Activated T-helper 1 cell treated with anti-CD3 and anti-CD28 coated beads, Interleukin-12 subunit alpha, Interleukin-12 subunit beta, Interleukin-2, Interleukin-4 antibody, amounts not matched to agents 30 ng/mL and 10 ng/mL and 1 ng/mL, durations not matched to agents 14 hours and 24 hours and 36 hours (primary cell): ENCODE measurements at regions of chr2 and their contacts with region 1.

Region 1: GRCh38 chr2:69643602-69644505 is at the start of gene AAK1:
- DNase-seq: peak; percentile 76
- H3K4me3 Mint-ChIP-seq: peak within 1 kb of the TSS; percentile 92
- H3K27ac Mint-ChIP-seq: peak within 1 kb of the TSS; percentile 95
- H3K4me1 Mint-ChIP-seq: peaks cover 71% of the 10 kb centered on the region
- H3K27me3 Mint-ChIP-seq: no peaks in the 10 kb centered on the region
- total RNA-seq, gene AAK1: 89.2 and 94.0 TPM in 2 replicates

Region 2: DNA sequence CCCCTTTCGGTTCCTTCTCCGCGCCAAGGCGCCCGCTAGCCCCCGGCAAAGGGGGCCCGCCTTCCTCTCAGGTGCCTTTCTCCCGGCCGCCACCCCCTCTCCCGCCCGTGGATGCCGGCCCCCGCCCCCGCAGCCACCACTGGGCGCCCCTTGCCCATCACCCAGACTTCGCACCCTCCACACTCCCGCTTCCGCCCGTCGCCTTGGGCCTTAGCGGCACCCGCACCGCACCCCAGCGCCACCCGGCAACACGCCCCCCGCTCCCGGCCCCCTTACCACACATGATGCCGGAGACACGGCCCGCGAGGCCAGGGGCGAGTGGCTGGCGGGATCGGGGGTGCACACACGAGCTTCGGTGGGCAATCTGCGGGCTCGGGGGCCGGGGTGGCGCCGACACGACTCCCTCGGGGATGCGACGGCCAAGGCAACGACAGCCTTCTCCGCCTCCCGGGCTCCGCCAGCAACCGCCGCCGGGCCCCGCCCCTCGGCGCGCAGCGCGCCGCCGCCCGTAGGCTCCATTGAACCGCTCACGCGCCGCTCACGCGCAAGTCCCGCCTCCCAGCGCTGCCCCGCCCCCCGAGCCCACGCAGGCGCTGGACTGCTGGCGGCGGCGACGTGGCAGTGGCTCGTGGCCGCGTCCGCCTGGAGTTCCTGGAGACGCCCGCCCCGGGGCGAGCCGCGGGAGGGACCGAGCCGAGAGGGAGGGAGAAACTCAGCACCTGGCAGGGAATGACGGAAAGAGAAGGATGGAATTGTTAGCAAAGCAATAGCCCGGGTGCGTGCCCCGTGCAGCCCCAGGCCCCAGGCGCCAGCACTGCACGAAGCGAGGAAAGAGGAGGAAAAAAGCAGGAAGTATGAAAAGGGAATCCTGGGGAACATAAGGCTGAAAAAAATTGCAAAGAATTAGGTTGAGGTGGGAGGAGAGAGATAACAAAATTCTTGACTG is 256.8 kb before region 1 on chr2 and contains the start of gene GFPT1:
- intact Hi-C with region 1: loop called (anchors 2 kb)
- DNase-seq: peak; percentile 93
- H3K4me3 Mint-ChIP-seq: peak within 1 kb of the TSS; percentile 87
- H3K27ac Mint-ChIP-seq: peak within 1 kb of the TSS; percentile 81
- H3K4me1 Mint-ChIP-seq: peaks cover 46% of the 10 kb centered on the region
- H3K27me3 Mint-ChIP-seq: no peaks in the 10 kb centered on the region
- total RNA-seq, gene GFPT1: 47.3 and 52.3 TPM in 2 replicates

Region 3: DNA sequence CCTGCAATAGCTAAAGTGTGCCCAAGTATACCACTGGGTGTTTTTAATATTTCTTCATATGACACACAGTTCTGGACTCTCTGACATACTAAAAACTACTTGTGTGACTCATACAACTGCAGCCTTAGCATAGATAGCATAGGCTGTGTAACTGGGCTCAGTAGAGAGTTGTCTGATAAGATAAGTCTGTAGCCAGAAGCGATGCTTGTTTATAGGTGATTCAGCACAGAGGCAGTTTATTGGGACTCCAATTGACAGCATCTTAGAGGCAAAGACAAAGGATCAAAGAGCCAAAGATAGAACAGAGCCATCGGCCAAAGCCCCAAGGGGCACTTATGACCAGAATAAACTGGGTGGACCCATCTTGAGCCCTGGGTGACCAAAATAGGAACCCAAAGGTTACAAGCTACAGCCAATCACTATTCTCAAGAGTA is 42.7 kb before region 1 on chr2:
- intact Hi-C with region 1: loop called (anchors 1 kb)
- DNase-seq: no peak
- H3K4me3 Mint-ChIP-seq: no peak overlapping the region
- H3K27ac Mint-ChIP-seq: peak overlapping the region; percentile 42
- H3K4me1 Mint-ChIP-seq: peaks cover 76% of the 10 kb centered on the region
- H3K27me3 Mint-ChIP-seq: no peaks in the 10 kb centered on the region

Region 4: DNA sequence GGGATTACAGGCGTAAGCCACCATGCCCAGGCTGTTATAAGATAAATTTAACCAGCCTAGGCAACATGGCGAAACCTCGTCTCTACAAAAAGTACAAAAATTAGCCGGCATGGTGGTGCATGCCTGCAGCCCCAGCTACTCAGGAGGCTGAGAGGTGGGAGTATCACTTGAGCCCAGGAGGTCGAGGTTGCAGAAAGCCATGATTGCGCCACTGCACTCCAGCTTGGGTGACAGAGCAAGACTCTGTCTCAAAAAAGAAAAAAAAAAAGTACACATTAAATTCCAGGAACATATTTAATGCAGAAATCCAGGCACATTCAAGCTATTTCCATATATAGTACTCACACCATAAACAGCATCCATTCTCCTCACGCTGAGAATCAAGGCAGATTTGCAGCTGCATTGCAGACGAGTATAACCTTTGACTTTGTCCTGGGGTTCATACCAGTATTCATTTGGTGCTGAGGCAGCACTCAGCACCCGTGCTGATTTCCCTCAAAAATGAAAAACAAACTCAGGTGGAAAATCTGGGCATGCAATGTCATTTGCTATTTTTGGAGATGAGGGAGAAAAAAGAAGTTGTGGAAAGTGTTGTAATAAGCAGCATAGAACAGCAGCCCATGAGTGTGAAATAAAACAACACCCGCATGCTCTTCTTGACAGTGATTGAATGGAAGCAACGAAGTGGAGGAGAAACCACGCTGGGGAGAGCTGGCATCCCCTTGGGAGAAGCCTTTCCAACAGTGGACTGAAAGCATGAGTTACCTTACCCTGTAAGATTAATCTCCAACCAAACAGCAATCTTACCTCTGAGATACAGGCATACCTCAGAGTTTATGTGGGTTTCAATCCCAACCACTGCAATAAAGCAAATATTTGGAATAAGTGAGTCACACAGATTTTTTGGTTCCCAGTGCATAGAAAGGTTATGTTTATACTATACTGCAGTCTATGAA is 51.3 kb after region 1 on chr2:
- intact Hi-C with region 1: loop called (anchors 1 kb)
- DNase-seq: no peak
- H3K4me3 Mint-ChIP-seq: peak overlapping the region; percentile 2
- H3K27ac Mint-ChIP-seq: peak overlapping the region; percentile 63
- H3K4me1 Mint-ChIP-seq: peaks cover 80% of the 10 kb centered on the region
- H3K27me3 Mint-ChIP-seq: no peaks in the 10 kb centered on the region

Region 5: DNA sequence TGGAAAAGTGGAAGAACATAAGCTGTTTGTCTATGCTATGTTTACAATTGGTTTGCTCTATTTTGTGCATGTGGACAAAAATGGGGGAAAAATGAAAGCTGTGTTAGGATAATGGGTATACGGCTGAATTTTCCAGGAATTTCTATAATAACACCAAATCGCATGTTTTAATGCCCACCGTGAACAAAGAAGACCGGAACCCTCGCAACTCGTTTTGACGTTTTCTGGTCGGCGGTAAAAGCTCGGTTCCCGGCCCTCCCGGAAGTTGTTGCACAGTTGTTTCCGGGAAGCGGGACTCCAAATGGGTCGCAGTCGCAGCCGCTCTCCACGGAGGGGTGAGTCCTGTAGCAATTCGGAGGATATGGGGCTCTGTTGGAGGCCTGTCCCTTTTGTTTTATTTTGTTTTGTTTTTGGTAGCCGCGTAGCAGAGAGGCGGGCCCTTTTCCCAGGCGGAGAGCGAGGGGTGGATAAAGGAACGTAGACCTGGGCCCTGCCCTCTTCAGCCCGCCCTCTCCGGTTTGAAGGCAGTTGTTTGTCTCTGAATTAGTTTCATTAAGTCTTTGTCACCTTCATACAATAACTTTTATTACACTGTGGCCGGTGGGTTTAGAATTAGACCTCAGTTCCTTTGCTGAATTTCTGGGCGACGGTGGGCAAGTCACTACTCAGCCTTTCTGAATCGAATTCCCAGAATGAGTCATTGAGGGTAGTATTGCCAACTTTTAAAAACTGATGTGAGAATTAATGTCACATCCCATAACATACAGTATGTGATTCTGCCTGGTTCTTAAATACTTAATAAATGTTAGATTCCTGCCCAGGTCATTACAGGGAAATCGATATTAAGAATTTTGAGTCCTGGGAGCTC is 250.1 kb after region 1 on chr2 and contains the start of gene SNRNP27:
- intact Hi-C with region 1: loop called (anchors 5 kb)
- DNase-seq: peak; percentile 71
- H3K4me3 Mint-ChIP-seq: peak within 1 kb of the TSS; percentile 99
- H3K27ac Mint-ChIP-seq: peak within 1 kb of the TSS; percentile 93
- H3K4me1 Mint-ChIP-seq: peaks cover 36% of the 10 kb centered on the region
- H3K27me3 Mint-ChIP-seq: no peaks in the 10 kb centered on the region
- total RNA-seq, gene SNRNP27: 54.0 and 55.6 TPM in 2 replicates

Region 6: DNA sequence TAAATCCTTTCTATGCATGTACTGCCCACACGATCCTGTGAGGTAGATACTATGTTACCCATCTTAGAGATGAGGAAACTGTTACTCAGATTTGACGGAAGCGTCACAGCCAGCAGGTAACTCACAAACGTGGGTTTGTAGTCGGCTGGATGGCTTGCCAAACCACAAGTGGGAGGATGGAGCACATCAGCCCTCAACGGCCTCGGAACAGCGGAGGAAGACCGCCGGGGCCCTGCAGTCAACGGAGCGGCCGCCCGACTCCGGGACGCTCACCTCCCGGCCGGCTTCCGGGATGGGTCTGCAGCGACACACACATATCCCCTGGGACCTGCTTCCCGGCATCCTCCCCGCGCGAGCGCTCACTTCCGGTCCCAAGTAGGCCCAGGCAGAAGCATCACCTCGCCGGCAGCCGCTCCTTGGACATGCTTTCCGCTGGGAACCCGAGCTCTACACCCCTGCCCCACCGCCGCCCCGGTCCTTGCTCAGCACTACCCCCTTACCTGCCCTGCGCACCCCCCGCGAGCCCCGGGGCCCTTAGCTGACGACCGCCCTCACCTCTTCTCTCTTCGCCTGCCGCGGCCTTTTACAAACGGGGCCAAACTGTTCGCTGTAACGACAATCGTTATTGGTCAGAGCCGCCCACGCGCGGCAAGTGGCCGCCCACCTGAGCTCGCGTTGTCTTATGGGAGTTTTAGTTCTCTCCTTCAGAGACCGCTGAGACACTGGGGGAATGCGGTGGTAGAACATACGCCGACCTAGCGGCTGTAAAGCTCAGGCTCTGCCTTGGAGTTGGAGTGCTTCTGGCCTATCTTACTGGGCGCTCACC is 546.8 kb after region 1 on chr2 and contains the start of gene C2orf42:
- intact Hi-C with region 1: loop called (anchors 5 kb)
- DNase-seq: peak; percentile 95
- H3K4me3 Mint-ChIP-seq: peak within 1 kb of the TSS; percentile 95
- H3K27ac Mint-ChIP-seq: peak within 1 kb of the TSS; percentile 99
- H3K4me1 Mint-ChIP-seq: peaks cover 23% of the 10 kb centered on the region
- H3K27me3 Mint-ChIP-seq: peaks cover 3% of the 10 kb centered on the region
- total RNA-seq, gene C2orf42: 21.6 and 24.1 TPM in 2 replicates